AG04450 (cell line): ENCODE measurements at regions of chr7 and their contacts with region 1.

Region 1: DNA sequence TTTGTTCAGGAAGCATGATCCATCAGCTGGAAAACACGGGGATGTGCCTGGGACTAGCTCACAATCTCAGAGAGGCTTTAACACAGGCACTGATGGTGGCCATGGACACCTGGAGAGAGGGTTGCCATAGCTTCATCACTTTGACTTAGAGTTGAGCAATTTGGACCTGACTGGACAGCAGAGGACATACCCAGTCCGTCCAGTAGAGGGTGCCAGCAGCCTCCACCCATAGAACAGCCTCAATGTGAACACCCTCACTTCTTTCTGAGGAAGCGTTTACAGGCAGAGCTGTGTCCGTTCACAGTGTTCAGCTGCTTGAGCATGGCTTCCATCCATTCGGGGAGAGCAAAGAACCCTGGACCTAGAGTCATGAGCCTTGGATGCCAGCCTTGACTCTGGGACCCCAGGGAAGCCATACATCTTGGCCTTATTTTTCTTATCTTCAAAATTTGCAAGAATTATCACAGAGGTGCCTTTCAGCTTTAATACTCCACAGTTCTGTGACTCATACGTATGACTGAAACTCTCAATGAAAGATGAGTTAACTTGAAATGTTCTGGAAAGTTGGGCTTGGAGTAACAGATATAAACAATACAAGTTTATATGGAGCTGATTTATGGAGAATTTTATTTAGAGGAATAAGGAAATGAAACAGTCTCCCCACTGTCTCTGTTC is 302.9 kb upstream of the PODXL start:
- DNase-seq: peak; percentile 26
- H3K4me3 ChIP-seq: no peak overlapping the region; the same call in 1 of the 2 replicates
- H3K27ac ChIP-seq: no peak overlapping the region
- H3K27me3 ChIP-seq: no peaks in the 10 kb centered on the region
- CTCF ChIP-seq: peak; percentile 94

Region 2: GRCh38 chr7:131843898-131844331 is 15.4 kb before region 1 on chr7:
- CTCF ChIA-PET with region 1: interaction called, 38 read pairs
- POLR2A ChIA-PET with region 1: no interaction called
- DNase-seq: no peak
- H3K4me3 ChIP-seq: no peak overlapping the region
- H3K27ac ChIP-seq: no peak overlapping the region
- H3K27me3 ChIP-seq: peaks cover 2% of the 10 kb centered on the region
- CTCF ChIP-seq: no peak

Region 3: GRCh38 chr7:131869169-131869844 is 10.0 kb after region 1 on chr7:
- CTCF ChIA-PET with region 1: interaction called, 16 read pairs
- POLR2A ChIA-PET with region 1: no interaction called
- DNase-seq: no peak
- H3K4me3 ChIP-seq: no peak overlapping the region
- H3K27ac ChIP-seq: no peak overlapping the region
- H3K27me3 ChIP-seq: no peaks in the 10 kb centered on the region
- CTCF ChIP-seq: no peak

Region 4: DNA sequence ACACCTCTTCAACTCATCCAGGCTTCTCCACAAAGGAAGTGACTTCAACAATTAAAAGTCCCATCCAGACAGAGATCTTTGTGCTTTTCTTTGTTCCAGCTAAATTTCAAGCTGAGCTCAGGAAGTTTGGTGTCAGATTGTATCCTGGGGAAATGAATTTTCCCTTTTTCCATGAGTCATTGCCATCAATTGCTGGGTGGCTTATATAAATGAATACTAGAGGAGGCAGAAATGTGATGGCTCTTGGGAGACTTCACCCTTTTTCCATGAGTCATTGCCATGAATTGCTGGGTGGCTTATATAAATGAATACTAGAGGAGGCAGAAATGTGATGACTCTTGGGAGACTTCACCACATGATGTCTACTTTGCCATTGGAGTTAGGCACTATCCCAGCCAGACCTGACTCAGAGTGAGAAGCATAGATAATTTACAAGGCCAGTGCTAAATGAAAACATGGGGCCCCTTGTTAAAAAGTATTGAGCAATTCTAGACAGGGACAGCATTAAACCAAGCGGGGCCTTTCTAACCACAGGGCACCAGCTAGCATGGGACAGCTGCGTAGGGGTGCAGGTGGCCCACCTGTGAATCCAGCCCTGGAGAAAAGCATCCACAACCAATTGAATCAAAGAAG is 36.4 kb after region 1 on chr7:
- CTCF ChIA-PET with region 1: interaction called, 13 read pairs
- POLR2A ChIA-PET with region 1: no interaction called
- DNase-seq: peak; percentile 11
- H3K4me3 ChIP-seq: no peak overlapping the region
- H3K27ac ChIP-seq: no peak overlapping the region
- H3K27me3 ChIP-seq: no peaks in the 10 kb centered on the region
- CTCF ChIP-seq: no peak

Region 5: GRCh38 chr7:132250883-132251653 is 391.8 kb after region 1 on chr7:
- CTCF ChIA-PET with region 1: interaction called, 10 read pairs
- POLR2A ChIA-PET with region 1: no interaction called
- DNase-seq: no peak
- H3K4me3 ChIP-seq: no peak overlapping the region
- H3K27ac ChIP-seq: no peak overlapping the region
- H3K27me3 ChIP-seq: no peaks in the 10 kb centered on the region
- CTCF ChIP-seq: no peak

Region 6: DNA sequence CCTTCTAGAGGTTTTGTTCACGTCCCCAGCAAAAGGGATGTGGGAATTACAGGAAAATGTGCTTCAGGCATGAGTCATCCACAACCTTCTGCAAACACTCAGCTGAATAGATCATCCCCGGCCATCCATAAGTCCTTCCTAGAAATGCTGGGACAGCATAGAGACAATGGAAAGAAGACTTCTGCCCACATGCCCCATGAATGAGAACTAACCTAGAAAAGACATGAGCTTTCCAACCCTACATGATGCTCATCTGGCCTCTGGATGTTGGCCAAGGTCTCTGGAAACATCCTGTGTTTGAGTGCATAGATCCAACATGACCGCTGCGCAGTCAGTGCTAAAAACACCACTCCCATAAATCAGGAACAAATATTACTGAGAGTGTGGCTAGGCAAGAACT is 439.5 kb after region 1 on chr7:
- CTCF ChIA-PET with region 1: no interaction called
- POLR2A ChIA-PET with region 1: no interaction called
- DNase-seq: no peak
- H3K4me3 ChIP-seq: no peak overlapping the region
- H3K27ac ChIP-seq: no peak overlapping the region
- H3K27me3 ChIP-seq: no peaks in the 10 kb centered on the region
- CTCF ChIP-seq: no peak

Region 7: GRCh38 chr7:132580717-132581285 is 721.5 kb after region 1 on chr7:
- CTCF ChIA-PET with region 1: interaction called, 12 read pairs
- POLR2A ChIA-PET with region 1: no interaction called
- DNase-seq: peak; percentile 36
- H3K4me3 ChIP-seq: no peak overlapping the region
- H3K27ac ChIP-seq: no peak overlapping the region
- H3K27me3 ChIP-seq: peaks cover 29% of the 10 kb centered on the region
- CTCF ChIP-seq: peak; percentile 75